Psoas muscle (tissue), 8 donors: ENCODE measurements at regions of chr19 and their contacts with region 1.

Region 1: DNA sequence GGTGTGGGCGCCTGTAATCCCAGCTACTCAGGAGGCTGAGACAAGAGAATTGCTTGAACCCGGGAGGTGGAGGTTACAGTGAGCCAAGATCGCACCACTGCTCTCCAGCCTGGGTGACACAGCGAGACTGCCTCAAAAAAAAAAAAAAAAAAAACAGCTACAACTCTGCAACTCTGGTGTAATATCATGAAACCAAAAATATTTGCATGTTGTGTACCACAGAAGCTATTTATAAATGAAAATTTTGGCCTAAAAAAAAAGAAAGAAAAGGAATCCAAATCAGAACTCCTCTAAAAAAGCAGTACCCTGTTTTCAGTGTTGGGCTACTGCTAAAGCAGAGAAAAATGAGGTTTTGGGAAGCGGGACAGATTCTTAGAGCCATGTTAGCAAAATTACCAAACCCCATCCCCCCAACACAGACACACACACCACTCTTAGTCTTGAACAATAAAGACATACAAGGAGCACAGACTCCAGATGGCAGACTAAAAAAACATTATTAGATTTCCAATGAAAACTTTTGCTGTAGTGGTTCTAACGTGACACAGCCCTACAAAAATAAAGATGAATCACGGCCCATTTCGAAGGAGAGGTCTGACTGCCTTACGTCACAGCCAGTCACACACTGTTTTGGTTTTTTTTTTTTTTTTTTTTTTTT is 51.5 kb downstream of the INSR start:
- DNase-seq: no peak
- ATAC-seq: peak; percentile 86 to 94 (median 91)
- H3K4me3 ChIP-seq: peak overlapping the region; percentile 34
- H3K27ac ChIP-seq: peak overlapping the region; percentile 83
- H3K4me1 ChIP-seq: peaks cover 25% of the 10 kb centered on the region
- H3K27me3 ChIP-seq: no peaks in the 10 kb centered on the region
- CTCF ChIP-seq: no peak

Region 2: GRCh38 chr19:7197760-7198696 is 44.7 kb before region 1 on chr19:
- intact Hi-C with region 1: loop called in 1 of 2 experiments (anchors 5 kb)
- DNase-seq: peak; percentile 94 to 97
- ATAC-seq: peak; percentile 89 to 95 (median 91)
- H3K4me3 ChIP-seq: peak overlapping the region; percentile 76
- H3K27ac ChIP-seq: peak overlapping the region; percentile 86
- H3K4me1 ChIP-seq: peaks cover 16% of the 10 kb centered on the region
- H3K27me3 ChIP-seq: no peaks in the 10 kb centered on the region
- CTCF ChIP-seq: peak; percentile 35

Region 3: GRCh38 chr19:7211204-7211951 is 31.4 kb before region 1 on chr19:
- intact Hi-C with region 1: loop called in 1 of 2 experiments (anchors 5 kb)
- DNase-seq: no peak
- ATAC-seq: peak in 2 of 4 donors; percentile 22 to 53
- H3K4me3 ChIP-seq: no peak overlapping the region
- H3K27ac ChIP-seq: peak overlapping the region; percentile 70
- H3K4me1 ChIP-seq: peaks cover 25% of the 10 kb centered on the region
- H3K27me3 ChIP-seq: no peaks in the 10 kb centered on the region
- CTCF ChIP-seq: no peak

Region 4: GRCh38 chr19:7287722-7288500 is 45.2 kb after region 1 on chr19:
- intact Hi-C with region 1: loop called (anchors 5 kb)
- DNase-seq: no peak
- ATAC-seq: no peak
- H3K4me3 ChIP-seq: no peak overlapping the region
- H3K27ac ChIP-seq: no peak overlapping the region
- H3K4me1 ChIP-seq: peaks cover 12% of the 10 kb centered on the region
- H3K27me3 ChIP-seq: no peaks in the 10 kb centered on the region
- CTCF ChIP-seq: no peak

Region 5: GRCh38 chr19:7293795-7294570 is 51.3 kb after region 1 on chr19 and contains the start of gene INSR:
- intact Hi-C with region 1: loop called (anchors 5 kb)
- DNase-seq: peak; percentile 92 to 95
- ATAC-seq: peak; percentile 92 to 96 (median 93)
- H3K4me3 ChIP-seq: peak within 1 kb of the TSS; percentile 98
- H3K27ac ChIP-seq: peak within 1 kb of the TSS; percentile 98
- H3K4me1 ChIP-seq: peaks cover 17% of the 10 kb centered on the region
- H3K27me3 ChIP-seq: no peaks in the 10 kb centered on the region
- CTCF ChIP-seq: no peak
- total RNA-seq, gene INSR: 48.5 to 95.1 (median 66.3) TPM